ENCODE measurements at regions of chr2 and their contacts with region 1.

Region 1: GRCh38 chr2:160406591-160407392 is 86.8 kb downstream of the RBMS1 start:
- DNase-seq: peak; percentile 82
- ATAC-seq: peak; percentile 75
- H3K4me3 Mint-ChIP-seq: peak overlapping the region; percentile 85
- H3K27ac Mint-ChIP-seq: peak overlapping the region; percentile 98
- H3K4me1 Mint-ChIP-seq: peaks cover 79% of the 10 kb centered on the region
- H3K27me3 Mint-ChIP-seq: no peaks in the 10 kb centered on the region

Region 2: DNA sequence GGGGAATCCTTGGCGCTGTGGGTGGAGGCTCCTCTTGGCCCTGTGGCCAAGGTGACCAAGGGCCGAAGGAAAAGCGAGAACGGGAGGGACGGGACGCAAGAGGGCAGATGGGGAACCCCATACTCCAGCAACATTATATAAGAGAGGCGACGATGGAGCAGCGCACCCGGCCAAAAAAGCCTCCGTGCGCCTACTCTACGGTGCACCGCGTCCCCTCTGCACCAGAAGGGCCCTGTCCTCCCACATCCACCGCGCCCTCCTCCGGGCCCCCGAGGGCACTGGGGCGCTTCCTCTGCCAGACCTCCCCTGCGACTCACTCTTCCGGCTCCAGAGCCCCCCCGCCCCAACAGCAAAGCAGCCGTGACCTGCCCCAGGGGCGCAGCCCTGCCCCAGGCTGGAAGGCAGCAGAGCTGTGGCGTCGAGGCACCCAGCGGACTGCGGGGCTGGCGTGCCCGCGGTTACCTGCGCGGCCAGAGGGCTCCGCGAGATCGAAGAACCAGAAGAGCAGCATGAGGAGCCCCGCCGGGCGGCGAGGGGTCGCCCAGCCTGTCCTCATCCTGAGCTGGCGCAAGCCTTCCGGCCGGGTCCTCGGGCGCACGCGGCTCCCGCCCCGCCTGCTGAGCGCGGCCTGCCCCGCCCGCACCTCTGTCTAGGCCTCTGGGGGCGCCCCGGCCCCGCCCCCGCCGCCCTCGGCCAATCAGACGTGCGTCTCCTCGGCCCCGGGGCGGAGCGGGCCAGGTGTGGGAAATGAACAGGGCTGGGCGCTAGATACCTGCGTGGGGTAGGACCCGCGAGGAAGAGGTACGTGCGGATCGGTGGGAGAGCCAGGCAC is 502.4 kb before region 1 on chr2:
- CTCF ChIA-PET with region 1: no interaction called
- POLR2A ChIA-PET with region 1: no interaction called
- intact Hi-C with region 1: loop called in 1 of 2 experiments (anchors 10 kb)
- DNase-seq: peak; percentile 91
- ATAC-seq: peak; percentile 76
- H3K4me3 Mint-ChIP-seq: peak within 1 kb of the TSS; percentile 93
- H3K27ac Mint-ChIP-seq: peak within 1 kb of the TSS; percentile 97
- H3K4me1 Mint-ChIP-seq: peaks cover 73% of the 10 kb centered on the region
- H3K27me3 Mint-ChIP-seq: no peaks in the 10 kb centered on the region

Region 3: DNA sequence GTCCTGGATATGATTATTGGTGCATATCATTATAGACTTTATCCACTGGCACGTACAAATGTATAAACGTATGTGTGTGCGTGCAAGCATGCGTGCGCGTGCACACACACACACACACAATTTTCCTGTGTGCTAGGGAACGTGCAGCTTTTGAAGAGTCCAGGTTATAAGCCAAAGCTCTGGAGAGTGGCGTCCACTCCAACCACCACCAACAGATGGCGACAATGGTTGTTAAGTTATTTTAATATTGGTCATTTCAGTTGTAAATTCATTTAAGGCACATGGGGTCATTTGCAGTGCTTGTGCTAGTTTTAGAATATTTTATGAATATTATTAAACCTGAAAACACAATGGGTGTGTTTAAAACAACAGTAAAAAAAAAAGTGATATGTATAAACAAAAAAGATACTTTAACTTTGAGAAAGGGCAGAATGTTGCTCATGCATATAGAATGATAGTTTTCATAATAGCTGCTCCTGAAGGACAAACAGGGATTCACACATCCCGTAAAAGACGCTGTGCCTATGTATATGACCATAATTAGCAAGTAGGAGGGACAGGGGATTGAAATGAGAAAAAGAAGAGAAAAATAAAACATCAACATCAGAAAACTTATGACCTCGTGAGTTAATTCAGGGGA is 82.5 kb before region 1 on chr2:
- CTCF ChIA-PET with region 1: interaction called, 3 read pairs
- POLR2A ChIA-PET with region 1: interaction called, 5 read pairs
- intact Hi-C with region 1: loop called (anchors 2 to 5 kb)
- DNase-seq: peak; percentile 71
- ATAC-seq: no peak
- H3K4me3 Mint-ChIP-seq: no peak overlapping the region
- H3K27ac Mint-ChIP-seq: peak overlapping the region; percentile 39
- H3K4me1 Mint-ChIP-seq: peaks cover 85% of the 10 kb centered on the region
- H3K27me3 Mint-ChIP-seq: no peaks in the 10 kb centered on the region

Region 4: GRCh38 chr2:160375802-160376469 is 30.9 kb before region 1 on chr2:
- CTCF ChIA-PET with region 1: no interaction called
- POLR2A ChIA-PET with region 1: no interaction called
- intact Hi-C with region 1: no loop called
- DNase-seq: no peak
- ATAC-seq: no peak
- H3K4me3 Mint-ChIP-seq: no peak overlapping the region
- H3K27ac Mint-ChIP-seq: no peak overlapping the region
- H3K4me1 Mint-ChIP-seq: peaks cover 83% of the 10 kb centered on the region
- H3K27me3 Mint-ChIP-seq: no peaks in the 10 kb centered on the region

Region 5: DNA sequence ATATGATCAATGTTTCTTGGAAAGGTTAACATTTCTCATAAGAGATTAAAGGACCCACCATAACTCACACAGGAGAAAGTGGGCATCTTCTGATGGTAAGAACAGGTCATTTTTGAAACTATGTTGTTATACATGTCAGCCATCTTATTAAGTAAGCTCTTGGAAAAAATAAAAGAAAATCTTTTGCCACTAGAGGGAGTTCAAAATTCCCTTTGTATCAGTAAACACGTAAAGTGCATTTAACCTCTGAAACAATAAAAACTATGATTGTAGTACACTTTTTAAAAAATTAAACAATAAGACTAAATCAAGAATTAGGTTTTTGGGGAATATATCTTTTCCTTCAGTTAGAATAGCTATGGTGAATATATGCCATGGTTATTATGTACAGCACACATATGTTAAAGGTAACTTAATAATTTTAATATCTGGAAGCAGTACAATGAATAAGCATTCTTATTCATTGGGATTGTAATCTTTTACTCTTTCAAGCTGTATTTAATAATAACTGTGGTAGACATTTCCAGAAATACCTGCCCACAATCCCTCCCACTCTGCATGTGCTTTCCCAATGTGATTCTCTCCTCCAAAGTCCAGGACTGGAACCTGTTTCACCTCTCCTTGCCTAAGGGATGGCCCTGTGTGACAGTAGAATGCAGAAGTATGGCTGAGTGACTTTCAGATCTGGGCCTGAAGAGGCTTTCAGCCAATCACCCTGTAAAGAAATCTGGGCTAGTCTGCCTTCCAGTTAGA is 22.6 kb after region 1 on chr2:
- CTCF ChIA-PET with region 1: interaction called, 20 read pairs
- POLR2A ChIA-PET with region 1: interaction called, 4 read pairs
- intact Hi-C with region 1: loop called (anchors 2 kb)
- DNase-seq: no peak
- ATAC-seq: peak; percentile 24
- H3K4me3 Mint-ChIP-seq: no peak overlapping the region
- H3K27ac Mint-ChIP-seq: peak overlapping the region; percentile 69
- H3K4me1 Mint-ChIP-seq: peaks cover 61% of the 10 kb centered on the region
- H3K27me3 Mint-ChIP-seq: no peaks in the 10 kb centered on the region

Region 6: DNA sequence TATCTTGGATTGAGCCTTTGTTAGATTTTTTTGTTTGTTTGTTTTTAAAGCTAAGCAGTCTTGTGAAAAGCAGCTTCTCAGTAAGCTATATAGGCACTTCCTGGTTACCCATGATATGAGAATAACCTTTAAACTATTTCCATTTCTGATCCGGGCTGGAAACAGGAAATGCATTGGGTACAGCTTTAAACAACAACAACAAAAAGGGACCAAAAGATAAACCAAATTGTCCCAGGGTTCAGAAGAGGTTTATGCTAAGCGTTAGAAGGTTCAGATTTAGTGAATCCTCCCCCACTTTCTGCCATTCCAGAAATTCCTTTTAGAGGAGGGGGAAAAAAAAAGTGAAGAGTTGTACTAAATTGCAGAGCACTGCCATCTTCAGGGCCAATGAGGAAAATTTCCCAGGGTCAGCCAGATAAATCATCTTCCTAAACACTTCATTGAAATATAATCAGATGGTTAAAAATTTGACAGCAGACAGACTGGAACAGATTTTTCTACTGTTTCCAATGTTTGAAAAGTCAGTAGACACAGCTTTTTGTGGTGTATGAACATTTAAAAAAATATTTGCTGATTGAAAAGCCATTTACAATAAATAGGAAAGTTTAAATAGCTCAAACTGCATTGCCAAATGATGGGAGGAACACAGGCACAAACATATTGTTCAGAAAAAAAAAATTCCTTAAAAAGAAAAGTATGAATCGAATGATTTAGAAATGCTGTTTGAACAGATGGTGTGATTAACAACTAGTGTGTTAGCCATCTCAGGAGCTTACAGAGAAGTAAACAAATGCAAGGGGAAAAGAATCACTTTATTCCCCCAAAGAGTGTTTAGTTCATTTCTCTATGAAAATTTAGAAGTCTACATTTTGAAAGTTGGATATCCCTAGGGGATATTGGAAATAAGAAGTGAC is 563.5 kb after region 1 on chr2:
- CTCF ChIA-PET with region 1: no interaction called
- POLR2A ChIA-PET with region 1: no interaction called
- intact Hi-C with region 1: loop called in 1 of 2 experiments (anchors 10 kb)
- DNase-seq: peak; percentile 20
- ATAC-seq: no peak
- H3K4me3 Mint-ChIP-seq: no peak overlapping the region
- H3K27ac Mint-ChIP-seq: no peak overlapping the region
- H3K4me1 Mint-ChIP-seq: peaks cover 5% of the 10 kb centered on the region
- H3K27me3 Mint-ChIP-seq: peaks cover 1% of the 10 kb centered on the region

Region 7: DNA sequence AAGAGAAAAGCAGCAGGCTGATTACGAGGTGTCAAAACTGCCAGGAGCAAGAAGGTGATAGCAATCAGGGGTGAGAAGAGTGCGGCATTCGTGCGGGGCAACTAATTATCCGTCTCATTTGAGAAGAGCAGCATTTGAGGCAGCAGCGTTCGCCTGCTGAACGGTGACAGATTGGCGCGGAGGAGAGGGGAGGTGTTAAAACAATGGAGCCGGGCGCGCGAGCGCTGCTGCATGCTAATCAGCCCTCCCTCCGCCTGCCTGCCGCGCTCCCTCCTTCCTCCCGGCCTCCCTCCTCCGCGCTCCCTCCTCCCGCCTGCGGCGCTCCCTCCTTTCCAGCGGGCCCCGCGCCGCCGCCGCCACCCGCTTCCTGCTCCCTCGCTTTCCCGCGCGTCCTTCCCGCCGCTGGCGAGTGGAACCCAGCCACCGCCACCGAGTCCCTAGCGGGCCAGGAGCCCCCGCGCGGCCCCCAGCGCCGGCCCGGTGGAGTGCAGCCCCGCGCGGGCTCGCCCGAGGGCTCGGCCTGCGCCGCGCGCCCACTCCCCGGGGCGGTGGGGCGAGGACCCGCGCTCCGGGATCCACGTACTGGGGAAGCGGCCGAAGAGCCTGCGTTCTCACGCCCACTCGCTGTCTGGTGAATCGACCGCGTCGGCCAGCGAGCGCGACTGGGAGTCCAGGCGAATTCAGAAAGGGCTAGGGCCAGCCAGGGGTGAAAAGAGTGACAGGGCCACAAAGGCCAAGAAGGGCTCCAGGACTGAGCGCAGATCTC is 832.0 kb after region 1 on chr2:
- CTCF ChIA-PET with region 1: no interaction called
- POLR2A ChIA-PET with region 1: no interaction called
- intact Hi-C with region 1: loop called in 1 of 2 experiments (anchors 5 kb)
- DNase-seq: peak; percentile 79
- ATAC-seq: peak; percentile 55
- H3K4me3 Mint-ChIP-seq: peak overlapping the region; percentile 76
- H3K27ac Mint-ChIP-seq: peak overlapping the region; percentile 81
- H3K4me1 Mint-ChIP-seq: peaks cover 54% of the 10 kb centered on the region
- H3K27me3 Mint-ChIP-seq: no peaks in the 10 kb centered on the region

Measured in activated CD4-positive, alpha-beta T cell treated with anti-CD3 and anti-CD28 coated beads for 36 hours (primary cell).